A673 (cell line): ENCODE measurements at regions of chr20 and their contacts with region 1.

Region 1: DNA sequence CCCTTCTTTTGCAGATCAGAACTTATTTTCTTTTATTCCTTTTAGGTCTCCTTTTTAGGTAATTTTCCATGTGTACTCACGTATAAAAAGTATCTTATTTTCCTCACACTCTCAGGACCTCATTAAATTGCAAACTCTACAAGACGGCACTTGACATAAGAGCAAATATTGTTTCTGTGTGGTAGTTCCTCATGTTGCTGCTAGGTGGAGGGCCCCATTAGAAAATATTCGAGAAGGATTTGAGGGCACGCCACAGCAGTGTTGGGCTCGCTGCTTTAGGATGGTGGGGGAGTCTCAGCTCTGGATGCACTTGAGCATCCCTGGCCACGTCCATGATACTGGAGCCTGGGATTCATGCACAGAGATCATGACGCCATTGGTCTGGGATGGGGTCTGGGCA is 64.9 kb upstream of the ZFP64 start:
- DNase-seq: no peak
- H3K4me3 ChIP-seq: no peak overlapping the region
- H3K27ac ChIP-seq: no peak overlapping the region
- H3K4me1 ChIP-seq: no peaks in the 10 kb centered on the region
- H3K27me3 ChIP-seq: no peaks in the 10 kb centered on the region
- CTCF ChIP-seq: no peak

Region 2: DNA sequence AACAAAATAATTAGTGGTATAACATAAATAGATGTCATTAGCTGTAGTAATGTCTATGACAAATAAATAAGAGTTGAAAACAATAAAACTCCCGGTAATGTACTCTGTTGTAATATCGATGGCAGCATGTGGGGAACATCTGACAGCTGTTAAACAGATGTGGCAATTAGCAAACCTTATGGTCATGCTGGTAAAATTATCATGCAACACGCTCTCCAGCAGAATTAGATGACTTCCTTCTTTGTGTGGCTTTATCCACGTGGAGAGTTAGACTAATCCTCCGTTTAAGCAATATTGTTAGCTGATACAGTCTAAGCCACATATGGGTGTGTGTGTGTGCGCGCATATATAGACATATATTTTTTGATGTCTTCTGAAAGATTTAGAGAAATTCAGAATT is 12.9 kb after region 1 on chr20:
- CTCF ChIA-PET with region 1: no interaction called
- POLR2A ChIA-PET with region 1: interaction called, 10 read pairs
- intact Hi-C with region 1: no loop called
- DNase-seq: peak; percentile 93
- H3K4me3 ChIP-seq: no peak overlapping the region
- H3K27ac ChIP-seq: peak overlapping the region; percentile 81
- H3K4me1 ChIP-seq: peaks cover 61% of the 10 kb centered on the region
- H3K27me3 ChIP-seq: no peaks in the 10 kb centered on the region
- CTCF ChIP-seq: no peak

Region 3: DNA sequence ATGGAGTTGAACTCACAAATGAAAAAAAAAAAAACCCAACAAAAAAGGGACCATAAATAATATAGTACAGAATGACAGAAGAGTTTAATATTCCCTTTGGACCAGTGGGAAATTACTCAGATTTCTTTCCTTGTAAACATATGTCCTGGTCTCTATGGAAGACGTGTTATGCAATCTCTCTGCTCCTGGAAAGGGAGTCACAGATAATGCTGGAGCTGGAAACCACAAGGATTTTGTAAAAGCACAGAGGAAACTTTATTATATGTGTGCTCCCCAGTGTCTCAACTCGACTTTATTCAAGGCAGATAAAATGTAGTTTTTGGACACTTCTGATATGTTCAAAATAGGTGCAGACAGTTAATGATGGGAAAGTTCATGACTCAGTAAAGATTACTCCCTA is 23.3 kb after region 1 on chr20:
- CTCF ChIA-PET with region 1: no interaction called
- POLR2A ChIA-PET with region 1: no interaction called
- intact Hi-C with region 1: no loop called
- DNase-seq: peak; percentile 41
- H3K4me3 ChIP-seq: no peak overlapping the region
- H3K27ac ChIP-seq: peak overlapping the region; percentile 2
- H3K4me1 ChIP-seq: peaks cover 22% of the 10 kb centered on the region
- H3K27me3 ChIP-seq: no peaks in the 10 kb centered on the region
- CTCF ChIP-seq: no peak